Naive thymus-derived CD4-positive, alpha-beta T cell (primary cell): ENCODE measurements at regions of chr2 and their contacts with region 1.

Region 1: GRCh38 chr2:161308178-161308955 is at the start of gene PSMD14:
- DNase-seq: peak; percentile 67 to 88 (median 85)
- ATAC-seq: peak; percentile 95
- H3K4me3 ChIP-seq: peak within 1 kb of the TSS; percentile 94
- H3K4me3 Mint-ChIP-seq: peak within 1 kb of the TSS; percentile 89 to 98 (median 95)
- H3K27ac ChIP-seq: peak within 1 kb of the TSS; percentile 77
- H3K27ac Mint-ChIP-seq: peak within 1 kb of the TSS; percentile 92 to 97 (median 95)
- H3K4me1 ChIP-seq: peaks cover 3 to 19% of the 10 kb centered on the region in 2 donors
- H3K4me1 Mint-ChIP-seq: peaks cover 24 to 65% (median 42%) of the 10 kb centered on the region in 7 donors
- H3K27me3 ChIP-seq: no peaks in the 10 kb centered on the region
- H3K27me3 Mint-ChIP-seq: peaks cover 0 to 9% (median 3%) of the 10 kb centered on the region in 5 donors
- total RNA-seq, gene PSMD14: 13.2 to 69.5 (median 23.2) TPM

Region 2: GRCh38 chr2:161136696-161137324 is 171.6 kb before region 1 on chr2:
- CTCF ChIA-PET with region 1: no interaction called
- POLR2A ChIA-PET with region 1: no interaction called
- intact Hi-C with region 1: loop called in 1 of 2 experiments (anchors 1 kb)
- DNase-seq: peak in 6 of 9 donors; percentile 31 to 76 (median 48)
- ATAC-seq: peak; percentile 94
- H3K4me3 ChIP-seq: peak overlapping the region; percentile 67
- H3K4me3 Mint-ChIP-seq: peak overlapping the region; percentile 68 to 98 (median 91)
- H3K27ac ChIP-seq: peak overlapping the region; percentile 83
- H3K27ac Mint-ChIP-seq: peak overlapping the region; percentile 89 to 99 (median 95)
- H3K4me1 ChIP-seq: peaks cover 21 to 27% of the 10 kb centered on the region in 2 donors
- H3K4me1 Mint-ChIP-seq: peaks cover 23 to 71% (median 58%) of the 10 kb centered on the region in 7 donors
- H3K27me3 ChIP-seq: no peaks in the 10 kb centered on the region
- H3K27me3 Mint-ChIP-seq: no peaks in the 10 kb centered on the region

Region 3: DNA sequence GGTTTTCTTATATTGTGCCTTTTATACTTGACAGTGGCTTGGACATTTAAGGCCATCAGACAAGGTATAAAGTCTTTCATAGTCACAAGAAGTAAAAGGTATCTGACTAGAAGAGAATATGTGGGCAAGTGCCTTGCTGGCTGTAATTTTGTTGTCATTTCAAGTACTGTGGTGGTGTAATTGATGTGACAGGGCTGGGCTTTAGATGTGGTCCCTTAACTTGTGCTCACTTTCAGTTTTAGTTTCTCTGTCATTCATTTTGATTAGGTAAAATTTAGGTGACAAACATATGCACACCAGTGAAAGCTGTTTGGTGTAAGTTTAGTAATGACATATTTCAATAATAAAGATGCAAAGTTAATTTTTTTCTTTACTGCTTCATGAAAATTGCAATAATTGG is 76.5 kb after region 1 on chr2:
- CTCF ChIA-PET with region 1: no interaction called
- POLR2A ChIA-PET with region 1: no interaction called
- intact Hi-C with region 1: loop called in 1 of 2 experiments (anchors 1 kb)
- DNase-seq: peak in 6 of 9 donors; percentile 8 to 49 (median 36)
- ATAC-seq: peak; percentile 78
- H3K4me3 ChIP-seq: no peak overlapping the region
- H3K4me3 Mint-ChIP-seq: peak overlapping the region in 2 of 10 donors; percentile 30 to 49
- H3K27ac ChIP-seq: no peak overlapping the region
- H3K27ac Mint-ChIP-seq: peak overlapping the region in 3 of 9 donors; percentile 30 to 41 (median 37)
- H3K4me1 ChIP-seq: peaks cover 8% of the 10 kb centered on the region in 2 donors
- H3K4me1 Mint-ChIP-seq: peaks cover 0 to 30% (median 13%) of the 10 kb centered on the region in 7 donors
- H3K27me3 ChIP-seq: no peaks in the 10 kb centered on the region
- H3K27me3 Mint-ChIP-seq: no peaks in the 10 kb centered on the region

Region 4: GRCh38 chr2:162013514-162014475 is 705.4 kb after region 1 on chr2:
- CTCF ChIA-PET with region 1: no interaction called
- POLR2A ChIA-PET with region 1: no interaction called
- intact Hi-C with region 1: loop called (anchors 2 to 5 kb)
- DNase-seq: peak in 7 of 9 donors; percentile 30 to 71 (median 55)
- ATAC-seq: peak; percentile 36
- H3K4me3 ChIP-seq: peak overlapping the region; percentile 11
- H3K4me3 Mint-ChIP-seq: peak overlapping the region; percentile 52 to 86 (median 70)
- H3K27ac ChIP-seq: peak overlapping the region; percentile 95
- H3K27ac Mint-ChIP-seq: peak overlapping the region; percentile 94 to 99 (median 98)
- H3K4me1 ChIP-seq: peaks cover 47 to 72% of the 10 kb centered on the region in 2 donors
- H3K4me1 Mint-ChIP-seq: peaks cover 41 to 86% (median 81%) of the 10 kb centered on the region in 7 donors
- H3K27me3 ChIP-seq: no peaks in the 10 kb centered on the region
- H3K27me3 Mint-ChIP-seq: no peaks in the 10 kb centered on the region

Region 5: GRCh38 chr2:162343824-162344616 is 1035.7 kb after region 1 on chr2 and contains the start of gene GCA:
- CTCF ChIA-PET with region 1: no interaction called
- POLR2A ChIA-PET with region 1: no interaction called
- intact Hi-C with region 1: loop called (anchors 2 to 5 kb)
- DNase-seq: peak; percentile 96 to 99 (median 98)
- ATAC-seq: peak; percentile 99
- H3K4me3 ChIP-seq: peak within 1 kb of the TSS; percentile 87
- H3K4me3 Mint-ChIP-seq: peak within 1 kb of the TSS; percentile 78 to 96 (median 91)
- H3K27ac ChIP-seq: peak within 1 kb of the TSS; percentile 53
- H3K27ac Mint-ChIP-seq: peak within 1 kb of the TSS; percentile 70 to 92 (median 81)
- H3K4me1 ChIP-seq: peaks cover 4 to 5% of the 10 kb centered on the region in 2 donors
- H3K4me1 Mint-ChIP-seq: peaks cover 0 to 21% (median 19%) of the 10 kb centered on the region in 7 donors
- H3K27me3 ChIP-seq: no peaks in the 10 kb centered on the region
- H3K27me3 Mint-ChIP-seq: peaks cover 0 to 9% (median 0%) of the 10 kb centered on the region in 5 donors
- total RNA-seq, gene GCA: 10.9 to 56.3 (median 13.4) TPM